B cell (primary cell): ENCODE measurements at regions of chr6 and their contacts with region 1.

Region 1: DNA sequence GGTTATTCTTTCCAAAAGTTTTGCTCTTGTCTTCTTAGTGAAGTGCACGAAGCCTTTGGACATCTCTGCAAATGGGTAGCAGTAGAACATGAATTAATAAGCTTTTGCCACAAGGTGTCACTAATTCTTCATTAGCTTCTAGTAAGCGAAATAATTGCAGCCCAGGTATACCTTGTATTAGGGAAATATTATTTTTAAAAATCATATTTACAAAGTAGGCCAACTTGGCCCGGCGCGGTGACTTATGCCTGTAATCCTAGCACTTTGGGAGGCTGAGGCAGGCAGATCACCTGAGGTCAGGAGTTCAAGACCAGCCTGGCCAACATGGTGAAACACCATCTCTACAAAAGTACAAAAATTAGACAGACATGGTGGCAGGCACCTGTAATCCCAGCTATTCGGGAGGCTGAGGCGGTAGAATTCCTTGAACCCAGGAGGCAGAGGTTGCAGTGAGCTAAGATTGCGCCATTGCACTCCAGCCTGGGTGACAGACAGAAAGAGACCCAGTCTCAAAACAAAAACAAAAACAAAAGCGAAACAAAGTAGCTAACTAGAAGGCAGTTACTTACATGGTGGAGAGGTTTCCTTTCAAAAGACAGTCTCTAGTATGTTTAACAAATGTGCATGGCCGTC is 8.8 kb upstream of the RSPH3 start:
- DNase-seq: peak; percentile 78
- ATAC-seq: peak; percentile 82
- H3K4me3 ChIP-seq: peak overlapping the region in 2 of 5 experiments; percentile 26 to 48
- H3K4me3 Mint-ChIP-seq: peak overlapping the region; percentile 38
- H3K27ac ChIP-seq: no peak overlapping the region
- H3K27ac Mint-ChIP-seq: peak overlapping the region; percentile 32
- H3K4me1 ChIP-seq: peaks cover 17 to 25% of the 10 kb centered on the region in 2 donors
- H3K4me1 Mint-ChIP-seq: peaks cover 39% of the 10 kb centered on the region
- H3K27me3 ChIP-seq: no peaks in the 10 kb centered on the region
- H3K27me3 Mint-ChIP-seq: no peaks in the 10 kb centered on the region
- CTCF ChIP-seq: peak; percentile 79

Region 2: GRCh38 chr6:159116343-159116742 is 107.6 kb after region 1 on chr6:
- CTCF ChIA-PET with region 1: interaction called, 478 read pairs
- POLR2A ChIA-PET with region 1: no interaction called
- intact Hi-C with region 1: no loop called
- DNase-seq: peak; percentile 93
- ATAC-seq: peak; percentile 84
- H3K4me3 ChIP-seq: peak overlapping the region in 2 of 5 experiments; percentile 0 to 48
- H3K4me3 Mint-ChIP-seq: peak overlapping the region; percentile 88
- H3K27ac ChIP-seq: peak overlapping the region; percentile 99
- H3K27ac Mint-ChIP-seq: peak overlapping the region; percentile 95
- H3K4me1 ChIP-seq: peaks cover 86 to 87% of the 10 kb centered on the region in 2 donors
- H3K4me1 Mint-ChIP-seq: peaks cover 87% of the 10 kb centered on the region
- H3K27me3 ChIP-seq: no peaks in the 10 kb centered on the region
- H3K27me3 Mint-ChIP-seq: no peaks in the 10 kb centered on the region
- CTCF ChIP-seq: no peak

Region 3: DNA sequence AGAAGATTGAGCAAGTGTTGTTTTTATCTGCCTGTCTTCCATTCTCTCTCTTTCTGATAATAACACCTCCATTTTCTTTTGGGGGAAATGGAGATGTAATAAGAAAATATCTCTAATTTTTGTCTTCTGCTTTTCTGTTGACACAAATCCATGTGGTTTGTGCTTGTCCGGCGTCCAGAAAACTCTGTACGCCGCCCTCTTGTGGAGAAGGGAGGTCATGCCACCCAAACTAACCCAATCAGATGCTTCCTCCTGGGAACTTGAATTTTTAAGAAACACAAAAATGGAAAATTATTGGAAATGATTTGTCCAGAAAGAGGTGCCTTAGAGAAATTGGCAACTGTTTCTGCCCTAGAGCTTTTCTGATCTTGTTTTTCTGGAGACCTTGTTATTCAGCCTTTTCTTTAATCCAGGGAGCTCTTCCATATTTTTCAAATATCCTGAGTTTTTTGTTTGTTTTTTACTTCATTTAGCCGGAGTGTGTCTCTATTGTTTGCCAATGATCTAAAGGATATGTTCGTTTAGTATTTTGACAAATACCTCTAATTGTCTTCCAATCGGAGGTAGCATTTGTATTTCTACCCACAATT is 142.6 kb after region 1 on chr6:
- CTCF ChIA-PET with region 1: interaction called, 728 read pairs
- POLR2A ChIA-PET with region 1: no interaction called
- intact Hi-C with region 1: loop called (anchors 1 kb)
- DNase-seq: peak; percentile 74
- ATAC-seq: peak; percentile 79
- H3K4me3 ChIP-seq: no peak overlapping the region
- H3K4me3 Mint-ChIP-seq: no peak overlapping the region
- H3K27ac ChIP-seq: no peak overlapping the region
- H3K27ac Mint-ChIP-seq: no peak overlapping the region
- H3K4me1 ChIP-seq: peaks cover 3 to 4% of the 10 kb centered on the region in 2 donors
- H3K4me1 Mint-ChIP-seq: peaks cover 3% of the 10 kb centered on the region
- H3K27me3 ChIP-seq: no peaks in the 10 kb centered on the region
- H3K27me3 Mint-ChIP-seq: peaks cover 3% of the 10 kb centered on the region
- CTCF ChIP-seq: peak; percentile 94